ENCODE measurements at regions of chr1 and their contacts with region 1.

Region 1: DNA sequence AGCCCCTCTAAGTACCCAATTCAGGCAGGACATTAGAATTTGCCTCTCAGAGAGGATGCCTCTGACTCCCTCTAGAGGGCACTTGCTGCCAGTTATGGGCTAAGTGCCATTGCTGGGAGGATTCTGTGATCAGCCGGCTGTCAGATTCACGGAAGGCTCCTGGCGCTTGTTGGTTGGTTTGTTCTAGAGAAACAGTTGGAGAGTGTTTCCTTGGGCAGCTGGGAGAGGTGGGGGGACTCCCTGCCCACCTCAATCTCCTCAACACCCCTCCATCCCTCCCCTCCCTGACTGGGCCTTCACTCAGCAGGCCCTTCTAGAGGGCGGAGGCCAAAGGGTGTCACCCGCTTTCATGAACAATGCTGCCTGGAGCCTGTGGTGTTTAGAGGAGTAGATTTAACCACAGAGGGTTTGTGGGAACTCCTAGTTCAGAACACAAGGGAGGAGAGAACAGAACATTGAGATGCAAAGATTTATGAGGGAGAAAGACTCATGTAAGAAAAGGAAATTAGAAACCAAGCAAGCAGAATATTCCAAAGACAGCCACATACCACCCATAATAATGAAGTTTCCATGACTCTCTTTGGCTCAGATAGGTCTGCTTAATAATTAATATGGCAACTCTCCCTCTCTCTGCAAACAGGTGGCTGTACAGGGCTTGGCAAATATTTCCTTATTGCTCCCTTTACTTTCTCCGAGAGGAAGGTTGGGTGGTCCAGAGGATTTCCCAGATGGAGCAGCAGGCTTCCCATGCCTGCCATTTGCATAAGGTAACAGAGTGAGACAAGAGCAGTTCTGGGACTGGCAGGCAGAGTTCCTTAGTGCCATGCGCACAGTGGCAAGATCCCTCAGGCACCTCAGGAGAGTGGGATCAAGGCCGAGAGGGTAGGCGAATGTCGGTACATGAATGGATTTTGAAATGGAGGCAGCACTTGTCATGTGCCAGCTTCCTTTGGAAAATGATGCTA is 30.0 kb upstream of the ACP6 start:
- DNase-seq: peak; percentile 79
- H3K4me3 Mint-ChIP-seq: peak overlapping the region; percentile 31
- H3K27ac Mint-ChIP-seq: peak overlapping the region; percentile 80
- H3K4me1 Mint-ChIP-seq: peaks cover 17% of the 10 kb centered on the region
- H3K27me3 Mint-ChIP-seq: no peaks in the 10 kb centered on the region
- CTCF ChIP-seq: peak; percentile 89

Region 2: DNA sequence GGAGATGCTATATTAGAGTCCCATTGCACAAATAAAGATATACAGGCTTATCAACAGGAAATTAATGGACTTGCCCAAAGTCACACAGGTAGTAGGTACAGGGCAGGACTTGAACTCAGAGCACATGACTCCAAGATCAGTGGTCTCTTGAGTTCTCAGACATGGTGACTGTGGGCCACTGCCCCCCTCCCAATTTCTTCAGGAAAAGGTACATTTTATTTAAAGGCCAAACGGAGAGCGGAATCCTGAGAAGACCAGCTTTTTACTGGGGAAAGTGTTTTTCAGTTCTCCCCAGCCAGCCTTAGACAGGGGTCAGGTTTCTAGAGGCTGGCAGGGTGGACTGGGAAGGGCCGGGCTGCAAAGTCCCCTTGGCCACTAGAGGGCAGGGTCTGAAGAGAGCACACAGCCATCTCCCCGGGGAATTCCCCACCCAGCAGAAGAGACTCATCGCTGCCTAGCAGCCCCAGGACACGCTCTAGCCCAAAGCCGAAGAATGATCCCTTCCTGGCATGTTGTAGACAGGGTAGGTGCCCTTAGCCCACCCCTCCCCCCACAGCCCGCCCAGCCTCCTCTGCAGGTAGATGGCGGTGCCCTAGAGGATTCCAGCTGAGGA is 59.7 kb before region 1 on chr1:
- CTCF ChIA-PET with region 1: interaction called, 3 read pairs
- intact Hi-C with region 1: loop called (anchors 2 kb)
- DNase-seq: peak; percentile 93
- H3K4me3 Mint-ChIP-seq: no peak overlapping the region
- H3K27ac Mint-ChIP-seq: no peak overlapping the region
- H3K4me1 Mint-ChIP-seq: peaks cover 20% of the 10 kb centered on the region
- H3K27me3 Mint-ChIP-seq: no peaks in the 10 kb centered on the region
- CTCF ChIP-seq: peak; percentile 95

Region 3: DNA sequence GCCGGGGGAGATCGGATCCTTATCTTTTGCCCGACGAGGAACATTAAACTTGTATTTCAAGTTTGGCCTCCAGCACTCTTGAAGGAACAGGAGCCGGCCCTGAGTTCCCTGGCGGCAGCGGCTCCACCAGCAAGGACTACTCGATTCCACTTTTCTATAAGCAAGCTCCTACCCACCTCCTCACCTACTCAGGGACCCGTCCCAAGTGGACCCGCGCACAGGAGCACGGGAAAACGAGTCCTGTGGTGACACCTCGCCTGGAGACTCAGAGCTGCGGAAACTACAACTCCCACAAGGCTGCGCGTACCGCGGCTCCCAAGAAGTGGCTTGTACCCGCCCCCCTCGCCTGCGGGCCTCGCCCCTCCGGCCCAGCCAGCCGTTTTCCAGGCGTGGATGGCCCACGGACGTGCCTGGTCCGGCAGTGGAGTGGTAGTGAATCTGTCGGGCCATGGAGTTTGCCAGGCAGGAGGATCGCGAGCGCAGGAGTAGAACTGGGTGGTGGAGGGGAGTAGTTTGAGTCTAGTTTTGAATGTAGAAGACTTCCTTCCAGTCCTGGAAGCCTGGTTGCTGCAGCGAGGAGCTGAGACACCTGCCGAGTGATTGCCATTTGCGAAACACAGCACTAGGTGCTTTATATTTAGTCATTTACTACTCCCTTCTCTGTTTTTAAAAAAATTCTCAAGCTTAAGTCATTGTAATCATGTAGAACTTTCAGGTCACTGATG is 29.8 kb before region 1 on chr1 and contains the start of gene ACP6:
- CTCF ChIA-PET with region 1: no interaction called
- intact Hi-C with region 1: loop called (anchors 2 kb)
- DNase-seq: peak; percentile 97
- H3K4me3 Mint-ChIP-seq: peak within 1 kb of the TSS; percentile 94
- H3K27ac Mint-ChIP-seq: peak within 1 kb of the TSS; percentile 81
- H3K4me1 Mint-ChIP-seq: peaks cover 59% of the 10 kb centered on the region
- H3K27me3 Mint-ChIP-seq: no peaks in the 10 kb centered on the region
- CTCF ChIP-seq: no peak
- total RNA-seq, gene ACP6: 93.5 and 116 TPM in 2 replicates

Measured in Calu3 (cell line).